ENCODE measurements at regions of chr7 and their contacts with region 1.

Region 1: DNA sequence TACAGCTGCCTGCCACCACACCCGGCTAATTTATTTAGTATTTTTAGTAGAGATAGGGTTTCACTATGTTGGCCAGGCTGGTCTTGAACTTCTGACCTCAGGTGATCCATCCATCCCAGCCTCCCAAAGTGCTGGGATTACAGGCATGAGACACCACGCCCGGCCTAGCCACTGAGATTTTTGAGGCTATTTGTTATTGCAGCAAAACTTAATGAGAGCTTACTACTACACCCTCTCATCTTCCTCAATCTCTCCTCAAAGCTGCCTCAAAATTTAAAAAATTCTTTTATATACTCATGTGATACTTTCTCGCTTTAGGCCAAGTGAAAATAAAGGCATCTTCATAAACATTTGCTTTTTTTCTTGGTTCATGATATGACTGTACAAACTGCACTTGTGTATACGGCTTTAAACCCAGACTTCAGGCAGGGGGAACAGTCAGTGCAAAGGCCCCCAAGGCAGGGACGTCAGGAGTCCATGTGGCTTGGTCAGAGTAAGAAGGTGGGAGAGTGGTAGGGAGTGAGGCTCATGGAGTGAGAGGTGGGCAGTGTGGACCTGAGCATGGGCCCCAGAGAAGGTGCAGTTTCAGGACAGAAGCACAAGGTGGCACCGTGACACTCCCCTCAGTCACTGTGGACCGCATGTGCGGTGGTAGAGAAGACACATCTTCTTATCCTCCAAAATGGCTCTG is 55.5 kb downstream of the SYPL1 start:
- DNase-seq: peak; percentile 77 to 90
- H3K4me3 ChIP-seq: no peak overlapping the region
- H3K27ac ChIP-seq: no peak overlapping the region
- H3K4me1 ChIP-seq: peaks cover 13 to 29% (median 22%) of the 10 kb centered on the region in 4 donors
- H3K27me3 ChIP-seq: no peaks in the 10 kb centered on the region
- CTCF ChIP-seq: peak in 5 of 7 experiments; percentile 78 to 94 (median 88)
- EP300 ChIP-seq: no peak
- POLR2A ChIP-seq: no peak

Region 2: GRCh38 chr7:106153891-106154449 is 97.3 kb after region 1 on chr7:
- intact Hi-C with region 1: loop called (anchors 5 kb)
- DNase-seq: peak; percentile 86 to 93
- H3K4me3 ChIP-seq: no peak overlapping the region
- H3K27ac ChIP-seq: no peak overlapping the region
- H3K4me1 ChIP-seq: peaks cover 0 to 20% (median 10%) of the 10 kb centered on the region in 4 donors
- H3K27me3 ChIP-seq: no peaks in the 10 kb centered on the region
- CTCF ChIP-seq: peak in 5 of 7 experiments; percentile 86 to 97 (median 88)
- EP300 ChIP-seq: no peak
- POLR2A ChIP-seq: no peak

Region 3: GRCh38 chr7:106239404-106239803 is 182.7 kb after region 1 on chr7:
- intact Hi-C with region 1: no loop called
- DNase-seq: peak in 1 of 2 donors; percentile 37
- H3K4me3 ChIP-seq: no peak overlapping the region
- H3K27ac ChIP-seq: no peak overlapping the region
- H3K4me1 ChIP-seq: no peaks in the 10 kb centered on the region
- H3K27me3 ChIP-seq: no peaks in the 10 kb centered on the region
- CTCF ChIP-seq: no peak
- EP300 ChIP-seq: no peak
- POLR2A ChIP-seq: no peak

Measured in stomach (tissue), 19 donors.